Adrenal gland (tissue), 19 donors: ENCODE measurements at regions of chr2 and their contacts with region 1.

Region 1: DNA sequence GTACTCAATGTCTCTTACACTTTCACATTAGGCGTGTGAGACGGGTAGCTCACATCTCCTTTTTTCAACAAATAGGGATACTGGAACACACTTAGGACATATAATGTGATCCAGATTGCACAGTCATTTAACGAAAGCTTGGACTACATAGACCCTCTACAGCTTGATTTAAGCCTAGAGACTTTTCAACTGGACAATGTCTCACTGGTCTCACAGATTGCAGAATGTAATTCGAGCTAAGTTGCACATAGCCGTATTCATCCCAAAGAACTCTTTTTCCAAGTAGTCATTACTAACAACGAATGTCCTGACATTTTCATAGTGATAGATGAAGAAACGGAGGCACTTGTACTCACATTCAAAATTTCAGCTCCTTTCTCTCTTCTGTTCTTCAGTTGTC is 612.1 kb downstream of the ZEB2 start:
- DNase-seq: no peak
- H3K4me3 ChIP-seq: no peak overlapping the region
- H3K27ac ChIP-seq: no peak overlapping the region
- H3K4me1 ChIP-seq: no peaks in the 10 kb centered on the region
- H3K27me3 ChIP-seq: no peaks in the 10 kb centered on the region
- CTCF ChIP-seq: no peak
- POLR2A ChIP-seq: no peak

Region 2: GRCh38 chr2:143885461-143885860 is 22.3 kb before region 1 on chr2:
- intact Hi-C with region 1: loop called in 1 of 2 experiments (anchors 2 kb)
- DNase-seq: no peak
- H3K4me3 ChIP-seq: no peak overlapping the region
- H3K27ac ChIP-seq: no peak overlapping the region
- H3K4me1 ChIP-seq: no peaks in the 10 kb centered on the region
- H3K27me3 ChIP-seq: no peaks in the 10 kb centered on the region
- CTCF ChIP-seq: no peak
- POLR2A ChIP-seq: no peak